ENCODE measurements at regions of chr6 and their contacts with region 1.

Region 1: GRCh38 chr6:106519460-106520394 is 109.6 kb downstream of the RTN4IP1 start:
- DNase-seq: peak; percentile 94
- ATAC-seq: peak; percentile 59
- H3K4me3 Mint-ChIP-seq: peak overlapping the region; percentile 77
- H3K27ac Mint-ChIP-seq: peak overlapping the region; percentile 99
- H3K4me1 Mint-ChIP-seq: peaks cover 61% of the 10 kb centered on the region
- H3K27me3 Mint-ChIP-seq: no peaks in the 10 kb centered on the region
- CTCF ChIP-seq: no peak

Region 2: GRCh38 chr6:106534564-106534982 is 14.8 kb after region 1 on chr6:
- CTCF ChIA-PET with region 1: interaction called, 23 read pairs
- POLR2A ChIA-PET with region 1: interaction called, 65 read pairs
- intact Hi-C with region 1: loop called (anchors 2 kb)
- DNase-seq: peak; percentile 77
- ATAC-seq: peak; percentile 84
- H3K4me3 Mint-ChIP-seq: no peak overlapping the region
- H3K27ac Mint-ChIP-seq: peak overlapping the region; percentile 84
- H3K4me1 Mint-ChIP-seq: peaks cover 78% of the 10 kb centered on the region
- H3K27me3 Mint-ChIP-seq: no peaks in the 10 kb centered on the region
- CTCF ChIP-seq: no peak

Region 3: GRCh38 chr6:106556368-106556960 is 36.7 kb after region 1 on chr6:
- CTCF ChIA-PET with region 1: interaction called, 136 read pairs
- POLR2A ChIA-PET with region 1: interaction called, 23 read pairs
- intact Hi-C with region 1: loop called (anchors 5 kb)
- DNase-seq: no peak
- ATAC-seq: no peak
- H3K4me3 Mint-ChIP-seq: no peak overlapping the region
- H3K27ac Mint-ChIP-seq: no peak overlapping the region
- H3K4me1 Mint-ChIP-seq: peaks cover 26% of the 10 kb centered on the region
- H3K27me3 Mint-ChIP-seq: no peaks in the 10 kb centered on the region
- CTCF ChIP-seq: peak; percentile 60